CD14-positive monocyte (primary cell): ENCODE measurements at regions of chr1 and their contacts with region 1.

Region 1: GRCh38 chr1:226029093-226029496 is 30.0 kb upstream of the SDE2 start:
- DNase-seq: peak; percentile 83 to 98 (median 94)
- H3K4me3 ChIP-seq: peak overlapping the region in 1 of 3 experiments; percentile 32
- H3K4me3 Mint-ChIP-seq: peak overlapping the region in 1 of 2 donors; percentile 59
- H3K27ac ChIP-seq: peak overlapping the region; percentile 76 to 93
- H3K27ac Mint-ChIP-seq: peak overlapping the region; percentile 93 to 96 (median 95)
- H3K4me1 ChIP-seq: peaks cover 63 to 69% of the 10 kb centered on the region in 2 donors
- H3K4me1 Mint-ChIP-seq: peaks cover 65% of the 10 kb centered on the region
- H3K27me3 ChIP-seq: no peaks in the 10 kb centered on the region
- H3K27me3 Mint-ChIP-seq: peaks cover 0 to 5% (median 5%) of the 10 kb centered on the region in 3 donors
- CTCF ChIP-seq: no peak

Region 2: GRCh38 chr1:225999227-225999911 is 29.7 kb before region 1 on chr1 and contains the start of gene SDE2:
- intact Hi-C with region 1: loop called in 1 of 2 experiments (anchors 2 kb)
- DNase-seq: peak; percentile 99 to 100 (median 99)
- H3K4me3 ChIP-seq: peak within 1 kb of the TSS; percentile 69 to 95 (median 87)
- H3K4me3 Mint-ChIP-seq: peak within 1 kb of the TSS; percentile 100
- H3K27ac ChIP-seq: peak within 1 kb of the TSS; percentile 97 to 98
- H3K27ac Mint-ChIP-seq: peak within 1 kb of the TSS; percentile 99 to 100 (median 100)
- H3K4me1 ChIP-seq: peaks cover 48 to 62% of the 10 kb centered on the region in 2 donors
- H3K4me1 Mint-ChIP-seq: peaks cover 69% of the 10 kb centered on the region
- H3K27me3 ChIP-seq: no peaks in the 10 kb centered on the region
- H3K27me3 Mint-ChIP-seq: peaks cover 0 to 5% (median 2%) of the 10 kb centered on the region in 3 donors
- CTCF ChIP-seq: no peak
- polyA plus RNA-seq, gene SDE2: 6.8 to 18.0 (median 8.4) TPM